Naive thymus-derived CD4-positive, alpha-beta T cell (primary cell): ENCODE measurements at regions of chrX and their contacts with region 1.

Region 1: GRCh38 chrX:120560842-120561633 is at the start of gene CUL4B:
- DNase-seq: peak; percentile 73 to 95 (median 92)
- ATAC-seq: peak; percentile 96
- H3K4me3 ChIP-seq: peak within 1 kb of the TSS; percentile 87
- H3K4me3 Mint-ChIP-seq: peak within 1 kb of the TSS; percentile 87 to 99 (median 98)
- H3K27ac ChIP-seq: peak within 1 kb of the TSS; percentile 100
- H3K27ac Mint-ChIP-seq: peak within 1 kb of the TSS; percentile 88 to 100 (median 95)
- H3K4me1 ChIP-seq: peaks cover 0 to 3% of the 10 kb centered on the region in 2 donors
- H3K4me1 Mint-ChIP-seq: peaks cover 6 to 32% (median 26%) of the 10 kb centered on the region in 7 donors
- H3K27me3 ChIP-seq: no peaks in the 10 kb centered on the region
- H3K27me3 Mint-ChIP-seq: no peaks in the 10 kb centered on the region
- total RNA-seq, gene CUL4B: 34.9 to 67.7 (median 43.0) TPM

Region 2: DNA sequence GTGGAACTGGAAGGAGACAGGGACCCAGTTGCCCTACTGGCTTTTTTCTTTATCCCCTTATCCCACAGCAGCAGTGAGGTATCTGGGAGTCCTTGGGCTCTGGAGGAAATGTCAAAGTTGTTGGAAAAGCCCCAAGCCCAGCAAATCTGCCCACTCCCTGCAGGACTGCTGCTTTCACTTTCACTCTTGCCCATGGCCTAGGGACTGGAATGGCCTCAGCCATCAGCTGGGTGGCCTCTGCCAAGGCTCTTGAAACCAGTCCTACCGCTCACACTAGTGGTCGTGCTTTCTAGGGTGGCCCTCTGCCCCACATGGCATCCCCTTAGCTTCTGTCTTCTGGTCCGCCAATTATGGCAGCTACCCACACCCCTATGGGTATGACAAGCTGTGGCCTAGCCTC is 435.6 kb before region 1 on chrX:
- CTCF ChIA-PET with region 1: no interaction called
- POLR2A ChIA-PET with region 1: no interaction called
- intact Hi-C with region 1: no loop called
- DNase-seq: no peak
- ATAC-seq: no peak
- H3K4me3 ChIP-seq: no peak overlapping the region
- H3K4me3 Mint-ChIP-seq: peak overlapping the region in 1 of 10 donors; percentile 44
- H3K27ac ChIP-seq: no peak overlapping the region
- H3K27ac Mint-ChIP-seq: peak overlapping the region in 2 of 9 donors; percentile 44 to 49
- H3K4me1 ChIP-seq: no peaks in the 10 kb centered on the region
- H3K4me1 Mint-ChIP-seq: peaks cover 0 to 7% (median 5%) of the 10 kb centered on the region in 7 donors
- H3K27me3 ChIP-seq: no peaks in the 10 kb centered on the region
- H3K27me3 Mint-ChIP-seq: no peaks in the 10 kb centered on the region

Region 3: GRCh38 chrX:120485638-120486520 is 75.2 kb before region 1 on chrX:
- CTCF ChIA-PET with region 1: no interaction called
- POLR2A ChIA-PET with region 1: interaction called, 3 read pairs
- intact Hi-C with region 1: loop called in 1 of 2 experiments (anchors 5 kb)
- DNase-seq: peak; percentile 21 to 52 (median 43)
- ATAC-seq: peak; percentile 83
- H3K4me3 ChIP-seq: peak overlapping the region; percentile 89
- H3K4me3 Mint-ChIP-seq: peak overlapping the region; percentile 81 to 94 (median 89)
- H3K27ac ChIP-seq: peak overlapping the region; percentile 69
- H3K27ac Mint-ChIP-seq: peak overlapping the region; percentile 81 to 96 (median 91)
- H3K4me1 ChIP-seq: peaks cover 9 to 18% of the 10 kb centered on the region in 2 donors
- H3K4me1 Mint-ChIP-seq: peaks cover 5 to 28% (median 19%) of the 10 kb centered on the region in 7 donors
- H3K27me3 ChIP-seq: no peaks in the 10 kb centered on the region
- H3K27me3 Mint-ChIP-seq: no peaks in the 10 kb centered on the region

Region 4: GRCh38 chrX:120499301-120500072 is 61.6 kb before region 1 on chrX:
- CTCF ChIA-PET with region 1: no interaction called
- POLR2A ChIA-PET with region 1: interaction called, 4 read pairs
- intact Hi-C with region 1: loop called (anchors 1 to 2 kb)
- DNase-seq: no peak
- ATAC-seq: no peak
- H3K4me3 ChIP-seq: no peak overlapping the region
- H3K4me3 Mint-ChIP-seq: no peak overlapping the region
- H3K27ac ChIP-seq: no peak overlapping the region
- H3K27ac Mint-ChIP-seq: peak overlapping the region in 1 of 9 donors; percentile 1
- H3K4me1 ChIP-seq: no peaks in the 10 kb centered on the region
- H3K4me1 Mint-ChIP-seq: peaks cover 5 to 11% (median 6%) of the 10 kb centered on the region in 7 donors
- H3K27me3 ChIP-seq: no peaks in the 10 kb centered on the region
- H3K27me3 Mint-ChIP-seq: peaks cover 0 to 5% (median 0%) of the 10 kb centered on the region in 5 donors

Region 5: DNA sequence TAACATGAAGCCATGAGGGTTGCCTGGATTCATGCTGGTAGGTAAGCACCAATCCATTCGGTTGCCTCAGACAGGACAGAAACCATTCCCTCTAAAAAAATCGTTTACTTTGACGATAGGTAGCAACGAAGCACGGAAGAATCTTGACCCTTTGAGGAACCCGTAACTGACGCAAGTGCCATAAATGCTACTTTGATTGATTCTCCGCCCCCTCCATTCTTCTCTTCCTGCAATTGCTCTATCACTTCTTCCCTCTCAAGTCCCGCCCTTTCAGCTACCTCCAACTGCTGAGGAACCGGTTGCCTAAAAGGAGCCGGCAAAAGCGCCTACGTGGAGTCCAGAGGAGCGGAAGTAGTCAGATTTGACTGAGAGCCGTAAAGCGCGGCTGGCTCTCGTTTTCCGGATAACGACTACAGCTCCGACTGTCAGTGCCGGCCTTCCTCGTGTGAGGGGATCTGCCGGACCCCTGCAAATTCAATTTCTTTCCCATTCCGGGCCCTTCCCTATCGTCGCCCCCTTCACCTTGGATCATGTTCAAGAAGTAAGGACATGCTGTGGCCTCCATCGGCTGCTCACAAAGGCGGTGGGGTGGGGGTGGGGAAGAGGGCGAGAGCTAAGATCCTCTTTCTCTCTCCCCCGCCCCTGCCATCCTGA is 42.8 kb after region 1 on chrX and contains the start of gene MCTS1:
- CTCF ChIA-PET with region 1: interaction called, 3 read pairs
- POLR2A ChIA-PET with region 1: interaction called, 111 read pairs
- intact Hi-C with region 1: loop called (anchors 1 kb)
- DNase-seq: peak; percentile 40 to 91 (median 82)
- ATAC-seq: peak; percentile 95
- H3K4me3 ChIP-seq: peak within 1 kb of the TSS; percentile 55
- H3K4me3 Mint-ChIP-seq: peak within 1 kb of the TSS; percentile 91 to 99 (median 96)
- H3K27ac ChIP-seq: peak within 1 kb of the TSS; percentile 87
- H3K27ac Mint-ChIP-seq: peak within 1 kb of the TSS; percentile 96 to 99 (median 98)
- H3K4me1 ChIP-seq: peaks cover 6 to 10% of the 10 kb centered on the region in 2 donors
- H3K4me1 Mint-ChIP-seq: peaks cover 0 to 19% (median 10%) of the 10 kb centered on the region in 7 donors
- H3K27me3 ChIP-seq: no peaks in the 10 kb centered on the region
- H3K27me3 Mint-ChIP-seq: peaks cover 0 to 7% (median 0%) of the 10 kb centered on the region in 5 donors
- total RNA-seq, gene MCTS1: 17.6 to 55.6 (median 27.3) TPM

Region 6: GRCh38 chrX:120617996-120618630 is 57.1 kb after region 1 on chrX:
- CTCF ChIA-PET with region 1: no interaction called
- POLR2A ChIA-PET with region 1: interaction called, 14 read pairs
- intact Hi-C with region 1: no loop called
- DNase-seq: no peak
- ATAC-seq: no peak
- H3K4me3 ChIP-seq: no peak overlapping the region
- H3K4me3 Mint-ChIP-seq: no peak overlapping the region
- H3K27ac ChIP-seq: no peak overlapping the region
- H3K27ac Mint-ChIP-seq: no peak overlapping the region
- H3K4me1 ChIP-seq: no peaks in the 10 kb centered on the region
- H3K4me1 Mint-ChIP-seq: peaks cover 0 to 4% (median 0%) of the 10 kb centered on the region in 7 donors
- H3K27me3 ChIP-seq: no peaks in the 10 kb centered on the region
- H3K27me3 Mint-ChIP-seq: no peaks in the 10 kb centered on the region